ENCODE measurements at regions of chr11 and their contacts with region 1.

Region 1: GRCh38 chr11:72683782-72684200 is 9.6 kb upstream of the PDE2A start:
- DNase-seq: peak; percentile 49
- H3K4me3 ChIP-seq: no peak overlapping the region
- H3K27ac ChIP-seq: no peak overlapping the region
- H3K4me1 ChIP-seq: no peaks in the 10 kb centered on the region
- H3K27me3 ChIP-seq: peaks cover 7% of the 10 kb centered on the region
- CTCF ChIP-seq: peak; percentile 69 to 91 (median 82)
- POLR2A ChIP-seq: no peak

Region 2: DNA sequence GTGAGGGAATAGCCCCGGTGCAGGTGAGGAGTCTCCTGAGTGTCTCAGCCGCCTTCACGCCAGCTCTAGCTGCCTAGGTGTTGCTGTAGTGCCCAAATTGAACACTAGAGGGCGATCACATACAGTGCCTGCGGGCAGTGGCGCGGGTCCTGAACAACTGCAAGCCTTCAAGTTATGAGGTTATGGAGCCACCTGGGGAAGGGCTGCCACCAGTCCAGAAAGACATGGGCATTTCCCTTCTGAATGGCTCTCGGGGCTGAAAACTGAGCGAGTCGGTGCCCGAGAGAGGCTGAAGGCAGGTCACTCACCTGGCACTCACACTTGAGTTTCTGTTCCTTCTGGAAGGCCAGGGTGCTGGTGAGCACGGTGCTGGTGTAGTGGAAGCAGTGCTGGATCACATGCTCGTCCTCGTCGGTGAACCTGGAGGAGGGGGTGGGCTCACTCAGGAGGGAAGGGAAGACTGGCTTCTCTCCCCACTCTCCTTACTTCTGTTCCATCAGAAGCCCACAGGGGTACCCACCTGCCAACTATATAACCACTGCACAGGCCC is 98.0 kb before region 1 on chr11:
- intact Hi-C with region 1: loop called (anchors 2 kb)
- DNase-seq: peak; percentile 68
- H3K4me3 ChIP-seq: no peak overlapping the region
- H3K27ac ChIP-seq: no peak overlapping the region
- H3K4me1 ChIP-seq: no peaks in the 10 kb centered on the region
- H3K27me3 ChIP-seq: peaks cover 7% of the 10 kb centered on the region
- CTCF ChIP-seq: peak; percentile 82 to 91 (median 88)
- POLR2A ChIP-seq: no peak

Measured in prostate gland (tissue), 2 donors.